Esophagus squamous epithelium (tissue), 5 donors: ENCODE measurements at regions of chr12 and their contacts with region 1.

Region 1: GRCh38 chr12:88579161-88579517 is 1.1 kb downstream of the KITLG start:
- DNase-seq: no peak
- H3K4me3 ChIP-seq: peak overlapping the region; percentile 67 to 87 (median 81)
- H3K27ac ChIP-seq: peak overlapping the region; percentile 76 to 89 (median 84)
- H3K4me1 ChIP-seq: peaks cover 0 to 64% (median 15%) of the 10 kb centered on the region in 3 donors
- H3K27me3 ChIP-seq: no peaks in the 10 kb centered on the region
- CTCF ChIP-seq: peak in 4 of 6 experiments; percentile 34 to 61 (median 48)
- POLR2A ChIP-seq: no peak

Region 2: DNA sequence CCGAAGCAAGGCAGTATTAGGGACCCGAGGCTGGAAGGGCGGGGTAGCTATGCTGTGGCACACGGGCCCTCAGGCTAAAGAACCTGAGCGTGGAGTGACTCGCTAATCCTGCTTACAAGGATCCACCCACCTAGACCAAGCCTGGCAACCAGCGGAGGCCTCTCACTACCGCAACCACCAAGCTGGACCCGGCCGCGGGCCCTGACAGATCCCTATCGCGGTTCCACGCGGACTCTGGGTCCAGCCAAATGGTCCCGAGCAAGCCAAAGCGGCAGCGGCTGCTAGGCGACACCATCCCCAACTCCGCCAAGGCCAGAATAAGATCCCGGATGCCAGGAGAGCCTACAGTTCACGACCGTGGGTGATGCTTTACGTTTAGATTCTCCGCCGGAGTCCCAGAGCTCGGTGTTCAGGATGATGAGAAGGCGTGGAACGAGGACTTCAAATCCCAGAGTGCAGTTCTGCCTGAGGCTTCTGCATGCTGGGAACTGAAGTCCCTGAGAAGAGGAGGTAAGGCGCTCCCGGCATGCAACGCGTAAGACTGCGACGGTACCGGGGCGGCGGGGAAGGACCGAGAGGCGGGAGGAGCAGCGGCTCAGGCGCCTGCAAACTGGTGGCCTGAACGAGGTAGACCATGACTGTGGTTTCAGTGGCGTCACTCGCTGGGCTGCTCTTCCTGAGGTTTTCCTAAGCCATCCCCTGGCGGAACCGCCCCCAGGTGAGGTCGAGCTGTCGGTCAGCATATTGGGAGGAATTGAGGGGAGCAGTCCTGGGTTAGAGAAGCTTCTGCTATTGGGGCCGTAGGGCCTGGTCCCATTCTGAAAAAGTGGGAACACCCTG is 437.1 kb before region 1 on chr12 and contains the starts of genes CEP290 and TMTC3:
- intact Hi-C with region 1: loop called (anchors 10 kb)
- DNase-seq: peak; percentile 90
- H3K4me3 ChIP-seq: peak within 1 kb of the TSS; percentile 75 to 87 (median 80)
- H3K27ac ChIP-seq: peak within 1 kb of the TSS; percentile 87 to 91 (median 90)
- H3K4me1 ChIP-seq: peaks cover 7 to 48% (median 14%) of the 10 kb centered on the region in 3 donors
- H3K27me3 ChIP-seq: no peaks in the 10 kb centered on the region
- CTCF ChIP-seq: peak in 1 of 6 experiments; percentile 30
- POLR2A ChIP-seq: peak in 3 of 4 donors; percentile 74 to 88 (median 77)
- total RNA-seq, gene CEP290: 0.72 to 15.8 (median 4.3) TPM
- total RNA-seq, gene TMTC3: 23.3 to 60.9 (median 32.8) TPM